ENCODE measurements at regions of chr1 and their contacts with region 1.

Region 1: DNA sequence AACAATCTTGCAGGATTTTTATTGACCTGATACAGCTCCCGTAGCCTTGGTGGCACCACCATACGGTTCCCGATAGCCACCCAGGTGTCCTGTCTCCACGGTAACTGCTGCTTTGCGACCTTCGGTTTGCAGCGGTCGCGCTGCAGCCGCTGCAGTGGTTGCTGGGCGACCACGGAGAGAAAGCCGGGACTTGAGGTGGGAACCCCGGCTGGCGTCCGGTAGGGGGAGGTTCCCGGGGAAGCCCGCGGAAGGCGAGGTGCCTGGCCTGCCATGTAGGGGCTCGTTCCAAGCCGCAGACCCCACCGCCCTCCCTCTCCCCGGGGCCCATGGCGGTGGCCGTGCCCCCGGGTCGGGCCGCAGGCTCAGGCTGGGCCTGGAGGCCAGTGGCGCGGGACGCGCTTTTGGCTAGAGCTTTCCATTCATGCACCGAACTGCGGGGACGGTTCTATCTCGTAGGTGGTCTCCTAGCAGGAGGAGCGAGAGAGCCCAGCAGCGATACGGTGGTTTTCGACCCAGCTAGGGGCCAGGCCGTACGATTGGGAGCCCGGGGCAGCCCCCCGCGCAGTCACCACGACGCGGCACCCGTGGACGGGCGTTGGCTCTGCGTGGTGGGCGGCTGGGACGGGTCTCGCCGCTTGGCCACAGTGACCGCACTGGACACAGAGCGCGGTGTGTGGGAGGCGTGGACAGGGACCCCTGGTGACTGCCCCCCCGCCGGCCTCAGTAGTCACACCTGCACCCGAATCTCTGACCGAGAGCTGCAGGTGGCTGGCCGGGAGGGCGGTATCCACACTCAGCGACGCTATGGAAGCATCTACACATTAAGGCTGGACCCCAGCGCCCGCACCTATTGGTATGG is at the start of gene KLHDC9:
- DNase-seq: peak; percentile 87
- ATAC-seq: peak; percentile 80
- H3K4me3 ChIP-seq: peak within 1 kb of the TSS; percentile 51 to 71 (median 60)
- H3K4me3 Mint-ChIP-seq: peak within 1 kb of the TSS; percentile 94
- H3K27ac ChIP-seq: peak within 1 kb of the TSS; percentile 45 to 57
- H3K27ac Mint-ChIP-seq: peak within 1 kb of the TSS; percentile 96
- H3K4me1 ChIP-seq: peaks cover 16 to 31% of the 10 kb centered on the region in 2 donors
- H3K4me1 Mint-ChIP-seq: peaks cover 33% of the 10 kb centered on the region
- H3K27me3 ChIP-seq: no peaks in the 10 kb centered on the region
- H3K27me3 Mint-ChIP-seq: no peaks in the 10 kb centered on the region
- CTCF ChIP-seq: no peak
- total RNA-seq, gene KLHDC9: 1.6 and 4.2 TPM in 2 replicates

Region 2: DNA sequence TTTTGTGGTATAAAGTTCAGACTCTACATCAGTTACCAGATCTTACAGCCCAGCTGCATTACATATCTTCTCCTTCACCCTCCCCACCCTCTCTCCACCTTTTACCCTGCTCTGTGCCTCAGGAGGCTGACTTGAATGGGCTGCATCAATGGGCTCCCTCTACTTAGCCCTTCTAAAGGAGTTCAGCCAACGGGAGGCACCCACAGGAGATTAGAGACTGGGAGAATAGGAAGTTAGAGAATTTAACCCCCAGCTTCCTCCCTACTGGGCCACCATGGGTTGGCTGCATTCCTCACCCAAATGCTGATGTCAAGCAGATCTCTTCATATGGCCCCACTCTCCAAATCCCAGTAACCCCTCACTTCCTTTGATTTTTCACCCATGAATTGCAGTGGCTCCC is 1334.8 kb before region 1 on chr1:
- CTCF ChIA-PET with region 1: no interaction called
- POLR2A ChIA-PET with region 1: no interaction called
- intact Hi-C with region 1: no loop called
- DNase-seq: no peak
- ATAC-seq: no peak
- H3K4me3 ChIP-seq: no peak overlapping the region
- H3K4me3 Mint-ChIP-seq: no peak overlapping the region
- H3K27ac ChIP-seq: no peak overlapping the region
- H3K27ac Mint-ChIP-seq: no peak overlapping the region
- H3K4me1 ChIP-seq: no peaks in the 10 kb centered on the region
- H3K4me1 Mint-ChIP-seq: no peaks in the 10 kb centered on the region
- H3K27me3 ChIP-seq: peaks cover 0 to 4% (median 0%) of the 10 kb centered on the region in 4 experiments
- H3K27me3 Mint-ChIP-seq: peaks cover 36% of the 10 kb centered on the region
- CTCF ChIP-seq: no peak

Region 3: DNA sequence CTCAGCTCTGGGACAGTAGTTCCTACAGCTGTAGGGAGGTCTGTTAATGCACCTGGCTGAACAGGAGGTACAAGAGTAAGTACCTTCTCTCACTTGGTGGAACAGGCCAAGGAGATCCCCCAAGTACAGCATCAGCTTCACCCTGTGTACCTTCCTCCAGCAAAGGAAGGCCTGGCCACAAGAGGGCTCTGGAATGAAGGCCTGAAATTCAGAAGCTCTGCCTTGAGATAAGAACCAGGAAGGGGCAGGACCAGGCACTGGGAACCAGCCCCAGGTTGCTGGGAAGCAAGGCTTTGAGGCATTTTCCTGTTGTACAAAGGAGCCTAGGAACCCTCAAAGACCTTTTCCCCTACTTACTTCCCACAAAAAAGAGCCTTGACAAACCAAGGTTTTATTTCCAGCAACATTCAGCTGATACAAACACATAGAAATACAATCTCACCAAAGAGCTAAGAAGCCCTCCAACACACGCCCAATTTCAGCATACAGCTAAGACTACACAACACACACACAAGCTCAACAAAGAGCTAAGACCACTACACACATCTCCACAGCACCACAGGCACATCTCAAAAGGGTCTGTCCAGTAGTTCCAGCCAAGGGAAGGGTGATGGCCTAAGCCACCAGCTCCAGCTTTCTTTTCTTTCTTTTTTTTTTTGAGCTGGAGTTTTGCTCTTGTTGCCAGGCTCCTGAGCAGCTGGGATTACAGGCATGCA is 101.0 kb before region 1 on chr1:
- CTCF ChIA-PET with region 1: interaction called, 137 read pairs
- POLR2A ChIA-PET with region 1: interaction called, 10 read pairs
- intact Hi-C with region 1: loop called (anchors 1 kb)
- DNase-seq: peak; percentile 69
- ATAC-seq: peak; percentile 82
- H3K4me3 ChIP-seq: no peak overlapping the region
- H3K4me3 Mint-ChIP-seq: no peak overlapping the region
- H3K27ac ChIP-seq: peak overlapping the region; percentile 15 to 51
- H3K27ac Mint-ChIP-seq: peak overlapping the region; percentile 68
- H3K4me1 ChIP-seq: peaks cover 0 to 5% of the 10 kb centered on the region in 2 donors
- H3K4me1 Mint-ChIP-seq: peaks cover 4% of the 10 kb centered on the region
- H3K27me3 ChIP-seq: no peaks in the 10 kb centered on the region
- H3K27me3 Mint-ChIP-seq: no peaks in the 10 kb centered on the region
- CTCF ChIP-seq: peak; percentile 52

Region 4: DNA sequence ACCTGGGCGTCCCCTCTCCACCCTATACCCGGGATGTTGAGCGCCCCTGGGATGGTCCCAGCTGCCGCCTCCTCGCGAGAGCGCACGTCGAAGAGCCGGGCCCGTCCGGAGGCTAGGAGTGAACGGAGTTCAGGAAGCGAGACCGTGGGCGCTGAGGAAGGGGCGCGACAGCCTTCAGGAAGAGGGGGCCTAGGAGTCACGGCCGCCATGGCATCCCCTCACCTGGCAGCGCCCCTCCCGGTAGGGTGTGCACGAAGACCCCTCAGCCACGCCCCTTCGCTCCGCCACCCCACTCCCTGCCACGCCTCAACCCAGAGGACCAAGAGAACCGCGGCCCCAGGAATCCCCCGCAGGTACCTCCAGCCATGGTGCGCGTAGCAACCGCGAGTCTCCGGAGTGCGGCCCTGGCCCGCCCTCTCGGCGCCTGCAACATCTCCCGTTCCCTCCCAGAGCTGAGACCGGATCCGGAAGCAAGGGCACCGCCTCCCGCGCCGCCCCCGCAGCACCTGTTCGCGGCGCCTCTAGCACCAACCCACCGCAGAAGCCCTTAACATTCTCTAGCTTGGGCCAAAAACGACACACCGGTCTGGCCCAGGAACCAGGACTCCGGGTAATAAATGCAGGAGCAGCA is 59.8 kb before region 1 on chr1 and contains the start of gene TSTD1:
- CTCF ChIA-PET with region 1: interaction called, 55 read pairs
- POLR2A ChIA-PET with region 1: interaction called, 7 read pairs
- intact Hi-C with region 1: no loop called
- DNase-seq: peak; percentile 94
- ATAC-seq: peak; percentile 88
- H3K4me3 ChIP-seq: peak within 1 kb of the TSS; percentile 56 to 98 (median 94)
- H3K4me3 Mint-ChIP-seq: peak within 1 kb of the TSS; percentile 93
- H3K27ac ChIP-seq: peak within 1 kb of the TSS; percentile 81 to 94
- H3K27ac Mint-ChIP-seq: peak within 1 kb of the TSS; percentile 97
- H3K4me1 ChIP-seq: peaks cover 50 to 75% of the 10 kb centered on the region in 2 donors
- H3K4me1 Mint-ChIP-seq: peaks cover 55% of the 10 kb centered on the region
- H3K27me3 ChIP-seq: no peaks in the 10 kb centered on the region
- H3K27me3 Mint-ChIP-seq: no peaks in the 10 kb centered on the region
- CTCF ChIP-seq: no peak
- total RNA-seq, gene TSTD1: 85.6 and 94.4 TPM in 2 replicates

Region 5: DNA sequence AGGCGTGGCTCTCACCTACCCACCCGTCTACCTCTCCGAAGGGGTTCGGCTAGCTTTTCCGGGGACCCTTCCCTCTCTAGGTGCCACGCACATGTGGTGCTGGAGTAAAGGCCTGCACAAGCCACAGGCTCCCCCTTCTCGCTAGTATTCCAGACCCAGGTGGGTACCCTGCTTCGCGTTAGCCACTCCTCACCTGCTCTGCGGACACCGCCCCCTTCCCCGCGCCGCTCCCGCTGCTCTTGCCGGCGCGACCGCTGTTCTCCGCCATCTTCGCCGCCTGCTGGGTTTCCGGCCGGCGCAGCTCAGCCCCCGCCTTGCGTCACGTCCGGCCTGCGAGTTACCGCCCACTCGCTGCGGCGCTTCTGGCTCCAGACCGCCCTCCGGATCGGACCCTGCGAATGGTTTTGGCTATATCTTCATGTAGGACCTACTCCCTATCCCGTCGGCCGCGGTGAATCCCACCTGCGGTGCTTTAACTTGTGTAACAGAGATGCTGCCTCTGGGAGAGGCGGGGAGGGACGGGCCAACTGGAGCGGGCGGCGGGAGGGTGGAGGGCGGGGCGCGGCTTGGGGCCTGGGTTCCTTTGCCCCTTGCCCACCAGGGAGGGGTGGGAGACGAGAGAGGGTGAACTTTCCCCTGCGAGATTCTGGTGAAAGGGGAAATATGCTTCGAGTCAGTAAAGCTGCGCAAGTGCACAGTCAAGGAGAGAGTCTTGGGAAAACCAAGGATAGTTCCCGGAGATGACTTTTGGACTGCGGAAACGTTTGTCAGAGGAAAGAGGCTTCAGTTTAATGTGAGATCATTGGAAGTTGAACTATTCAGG is 19.5 kb after region 1 on chr1 and contains the starts of genes NIT1 and PFDN2:
- CTCF ChIA-PET with region 1: interaction called, 13 read pairs
- POLR2A ChIA-PET with region 1: interaction called, 12 read pairs
- intact Hi-C with region 1: loop called (anchors 1 kb)
- DNase-seq: peak; percentile 90
- ATAC-seq: peak; percentile 84
- H3K4me3 ChIP-seq: peak within 1 kb of the TSS; percentile 71 to 98 (median 97)
- H3K4me3 Mint-ChIP-seq: peak within 1 kb of the TSS; percentile 97
- H3K27ac ChIP-seq: peak within 1 kb of the TSS; percentile 86 to 89
- H3K27ac Mint-ChIP-seq: peak within 1 kb of the TSS; percentile 94
- H3K4me1 ChIP-seq: peaks cover 45 to 54% of the 10 kb centered on the region in 2 donors
- H3K4me1 Mint-ChIP-seq: peaks cover 78% of the 10 kb centered on the region
- H3K27me3 ChIP-seq: no peaks in the 10 kb centered on the region
- H3K27me3 Mint-ChIP-seq: no peaks in the 10 kb centered on the region
- CTCF ChIP-seq: no peak
- total RNA-seq, gene NIT1: 53.5 and 56.1 TPM in 2 replicates
- total RNA-seq, gene PFDN2: 29.9 and 32.3 TPM in 2 replicates

Region 6: GRCh38 chr1:161185282-161185682 is 86.8 kb after region 1 on chr1:
- CTCF ChIA-PET with region 1: no interaction called
- POLR2A ChIA-PET with region 1: no interaction called
- intact Hi-C with region 1: no loop called
- DNase-seq: peak; percentile 91
- ATAC-seq: peak; percentile 76
- H3K4me3 ChIP-seq: peak overlapping the region in 4 of 5 experiments; percentile 31 to 63 (median 36)
- H3K4me3 Mint-ChIP-seq: peak overlapping the region; percentile 71
- H3K27ac ChIP-seq: peak overlapping the region; percentile 86 to 94
- H3K27ac Mint-ChIP-seq: peak overlapping the region; percentile 93
- H3K4me1 ChIP-seq: peaks cover 73 to 93% of the 10 kb centered on the region in 2 donors
- H3K4me1 Mint-ChIP-seq: peaks cover 78% of the 10 kb centered on the region
- H3K27me3 ChIP-seq: no peaks in the 10 kb centered on the region
- H3K27me3 Mint-ChIP-seq: no peaks in the 10 kb centered on the region
- CTCF ChIP-seq: no peak

Region 7: GRCh38 chr1:161209790-161210409 is 111.5 kb after region 1 on chr1:
- CTCF ChIA-PET with region 1: no interaction called
- POLR2A ChIA-PET with region 1: no interaction called
- intact Hi-C with region 1: no loop called
- DNase-seq: peak; percentile 81
- ATAC-seq: peak; percentile 99
- H3K4me3 ChIP-seq: no peak overlapping the region
- H3K4me3 Mint-ChIP-seq: no peak overlapping the region
- H3K27ac ChIP-seq: no peak overlapping the region
- H3K27ac Mint-ChIP-seq: no peak overlapping the region
- H3K4me1 ChIP-seq: peaks cover under 1% of the 10 kb centered on the region in 2 donors
- H3K4me1 Mint-ChIP-seq: peaks cover 3% of the 10 kb centered on the region
- H3K27me3 ChIP-seq: peaks cover 0 to under 1% (median under 1%) of the 10 kb centered on the region in 4 experiments
- H3K27me3 Mint-ChIP-seq: peaks cover 4% of the 10 kb centered on the region
- CTCF ChIP-seq: peak; percentile 74

Region 8: DNA sequence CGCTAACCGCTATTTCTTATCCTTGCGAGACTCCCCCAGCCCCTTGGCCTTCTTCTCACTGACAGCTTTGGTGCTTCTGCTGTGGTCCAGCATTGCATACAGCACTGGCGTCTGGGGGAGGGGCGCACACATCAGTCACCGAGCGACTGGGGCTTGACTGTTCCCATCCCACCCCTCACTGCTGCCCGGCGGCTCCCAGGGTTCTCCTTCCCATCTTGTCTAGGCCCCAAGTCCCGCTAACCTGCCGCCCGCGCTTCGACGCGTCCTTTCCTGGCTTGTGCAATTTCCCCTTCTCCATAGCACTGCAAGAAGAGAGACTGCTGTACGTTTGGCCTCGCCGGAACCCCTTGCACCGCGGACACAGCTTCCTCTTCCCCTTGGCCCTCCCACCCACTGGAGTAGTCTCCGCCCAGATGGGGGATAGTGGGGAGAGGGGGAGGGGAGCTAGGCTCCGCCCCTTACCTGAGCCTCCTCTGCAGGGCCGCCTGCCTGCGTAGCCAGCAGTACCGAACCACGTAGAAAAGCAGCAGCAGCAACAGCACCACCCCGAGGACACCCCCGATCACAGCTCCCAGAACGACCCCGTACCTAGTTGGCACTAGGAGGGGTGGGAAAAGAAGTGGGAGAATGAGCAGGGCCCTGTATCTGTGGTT is 207.6 kb after region 1 on chr1:
- CTCF ChIA-PET with region 1: no interaction called
- POLR2A ChIA-PET with region 1: no interaction called
- intact Hi-C with region 1: loop called (anchors 1 kb)
- DNase-seq: peak; percentile 93
- ATAC-seq: peak; percentile 89
- H3K4me3 ChIP-seq: peak overlapping the region; percentile 66 to 91 (median 80)
- H3K4me3 Mint-ChIP-seq: peak overlapping the region; percentile 97
- H3K27ac ChIP-seq: peak overlapping the region; percentile 59 to 72
- H3K27ac Mint-ChIP-seq: peak overlapping the region; percentile 93
- H3K4me1 ChIP-seq: peaks cover 26% of the 10 kb centered on the region in 2 donors
- H3K4me1 Mint-ChIP-seq: peaks cover 42% of the 10 kb centered on the region
- H3K27me3 ChIP-seq: no peaks in the 10 kb centered on the region
- H3K27me3 Mint-ChIP-seq: no peaks in the 10 kb centered on the region
- CTCF ChIP-seq: peak; percentile 49

Measured in B cell (primary cell).